Ascending aorta (tissue), 2 donors: ENCODE measurements at regions of chr20 and their contacts with region 1.

Region 1: GRCh38 chr20:44683263-44684046 is 31.7 kb upstream of the CCN5 start:
- DNase-seq: no peak
- H3K4me3 ChIP-seq: no peak overlapping the region
- H3K27ac ChIP-seq: no peak overlapping the region
- H3K4me1 ChIP-seq: peaks cover 0 to 5% of the 10 kb centered on the region in 2 donors
- H3K27me3 ChIP-seq: no peaks in the 10 kb centered on the region
- CTCF ChIP-seq: peak in 2 of 3 experiments; percentile 34 to 46

Region 2: DNA sequence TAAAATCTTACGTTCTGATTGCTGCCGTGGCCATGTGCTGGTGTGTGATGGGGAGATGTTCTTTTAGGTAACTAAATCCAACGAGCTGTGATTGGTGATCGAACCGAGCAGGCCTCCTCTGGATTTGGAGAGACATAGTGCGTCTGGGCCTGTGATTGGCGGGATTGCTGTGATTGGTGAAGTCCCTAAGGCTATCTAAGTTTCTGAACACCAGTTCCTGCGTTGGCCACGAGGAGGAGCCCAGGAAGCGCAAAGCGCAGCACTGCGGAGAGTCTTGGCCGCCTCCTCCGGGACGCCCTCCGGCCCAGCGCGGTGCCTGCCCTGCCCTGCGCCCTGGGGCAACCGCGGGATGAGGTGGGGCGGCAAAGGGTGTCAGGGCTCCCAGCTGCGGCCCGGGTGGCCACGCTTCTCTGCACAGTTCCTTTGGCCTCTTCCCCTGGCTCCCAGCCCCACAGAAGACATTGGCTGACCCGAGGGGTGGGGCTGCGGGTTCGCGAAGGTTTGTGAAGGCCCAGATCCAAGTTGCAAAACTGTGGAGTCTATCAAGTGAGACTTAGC is 294.9 kb before region 1 on chr20:
- intact Hi-C with region 1: loop called (anchors 10 kb)
- DNase-seq: peak in 1 of 2 donors; percentile 68
- H3K4me3 ChIP-seq: no peak overlapping the region
- H3K27ac ChIP-seq: no peak overlapping the region
- H3K4me1 ChIP-seq: peaks cover 0 to 2% of the 10 kb centered on the region in 2 donors
- H3K27me3 ChIP-seq: no peaks in the 10 kb centered on the region
- CTCF ChIP-seq: peak; percentile 44 to 58 (median 56)

Region 3: GRCh38 chr20:44733341-44734069 is 50.0 kb after region 1 on chr20:
- intact Hi-C with region 1: loop called (anchors 1 kb)
- DNase-seq: peak in 1 of 2 donors; percentile 90
- H3K4me3 ChIP-seq: no peak overlapping the region
- H3K27ac ChIP-seq: peak overlapping the region; percentile 80 to 93
- H3K4me1 ChIP-seq: peaks cover 11 to 54% of the 10 kb centered on the region in 2 donors
- H3K27me3 ChIP-seq: no peaks in the 10 kb centered on the region
- CTCF ChIP-seq: peak; percentile 94 to 96 (median 95)

Region 4: DNA sequence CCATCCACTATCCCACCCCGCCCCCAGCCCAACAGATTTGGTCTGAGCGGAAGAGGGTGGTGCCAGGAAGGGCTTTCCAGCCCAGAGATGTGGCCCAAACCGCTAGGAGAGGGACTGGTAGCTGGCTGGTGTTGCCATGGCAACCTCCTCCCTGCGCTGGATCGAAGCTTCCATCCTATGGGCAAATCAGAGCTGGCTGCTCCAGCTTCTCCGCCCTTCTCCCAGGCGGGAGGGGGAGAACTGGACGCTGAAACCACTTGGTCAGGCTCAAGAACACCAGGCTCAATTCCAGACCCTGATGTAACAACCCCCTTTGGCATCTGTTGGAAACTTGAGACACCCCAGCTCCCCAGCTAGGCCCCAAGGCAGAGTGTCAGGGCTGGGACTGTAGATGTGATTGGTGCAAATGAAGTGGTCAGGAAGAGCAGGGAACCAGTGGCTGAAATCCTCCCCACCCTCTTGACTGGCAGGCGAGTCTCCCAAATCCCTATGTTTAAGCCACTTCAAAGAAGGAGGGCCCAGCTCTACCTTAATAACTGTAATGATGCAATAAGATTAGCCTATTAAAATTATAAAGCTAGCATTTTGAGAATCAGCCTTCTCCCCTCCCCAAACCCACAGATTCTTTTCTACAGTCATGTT is 122.6 kb after region 1 on chr20:
- intact Hi-C with region 1: no loop called
- DNase-seq: peak; percentile 17 to 79
- H3K4me3 ChIP-seq: no peak overlapping the region
- H3K27ac ChIP-seq: no peak overlapping the region
- H3K4me1 ChIP-seq: peaks cover 7 to 10% of the 10 kb centered on the region in 2 donors
- H3K27me3 ChIP-seq: peaks cover 10% of the 10 kb centered on the region
- CTCF ChIP-seq: no peak

Region 5: GRCh38 chr20:44866703-44867335 is 183.4 kb after region 1 on chr20:
- intact Hi-C with region 1: loop called (anchors 1 kb)
- DNase-seq: no peak
- H3K4me3 ChIP-seq: peak overlapping the region in 1 of 2 donors; percentile 46
- H3K27ac ChIP-seq: peak overlapping the region in 1 of 2 donors; percentile 9
- H3K4me1 ChIP-seq: peaks cover 9 to 31% of the 10 kb centered on the region in 2 donors
- H3K27me3 ChIP-seq: no peaks in the 10 kb centered on the region
- CTCF ChIP-seq: no peak

Region 6: DNA sequence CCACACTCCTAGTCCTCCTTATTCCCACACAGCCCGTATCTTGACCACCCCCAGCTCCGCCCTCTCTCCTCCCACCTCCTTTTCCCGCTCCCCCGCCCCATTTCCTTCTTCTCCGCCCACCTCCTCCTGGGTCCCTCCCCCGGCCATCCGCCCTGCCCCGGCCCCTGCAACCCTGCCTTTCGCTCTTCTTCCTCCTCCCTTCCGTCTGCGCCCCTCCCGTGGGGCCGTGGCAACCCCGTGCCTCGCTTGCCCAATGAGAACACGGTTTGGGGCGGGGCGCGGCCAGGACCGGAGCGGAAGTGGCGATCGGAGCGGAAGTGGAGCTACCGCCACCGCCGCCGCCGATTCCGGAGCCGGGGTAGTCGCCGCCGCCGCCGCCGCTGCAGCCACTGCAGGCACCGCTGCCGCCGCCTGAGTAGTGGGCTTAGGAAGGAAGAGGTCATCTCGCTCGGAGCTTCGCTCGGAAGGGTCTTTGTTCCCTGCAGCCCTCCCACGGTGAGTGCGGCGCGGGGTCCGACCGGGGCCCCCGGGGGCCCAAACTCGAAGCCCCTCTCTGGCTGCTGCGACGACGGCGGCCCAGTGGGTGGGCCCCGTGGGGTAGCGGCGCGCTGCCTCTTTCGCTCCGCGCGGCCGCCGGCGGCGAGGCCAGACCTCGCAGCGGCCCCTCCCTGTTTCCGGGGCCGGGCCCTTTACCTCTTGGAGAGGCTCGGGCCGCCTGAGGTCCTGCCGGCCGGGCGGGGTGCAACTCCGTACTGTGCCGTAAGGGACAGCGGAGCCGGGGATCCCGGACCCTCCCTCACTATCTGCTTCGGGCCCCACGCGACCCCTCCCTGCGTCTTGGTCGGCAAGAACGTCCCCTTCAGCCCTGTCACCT is 202.2 kb after region 1 on chr20 and contains the start of gene YWHAB:
- intact Hi-C with region 1: loop called (anchors 5 kb)
- DNase-seq: peak; percentile 96 to 99
- H3K4me3 ChIP-seq: peak within 1 kb of the TSS; percentile 78 to 91
- H3K27ac ChIP-seq: peak within 1 kb of the TSS; percentile 96 to 97
- H3K4me1 ChIP-seq: peaks cover 0 to 28% of the 10 kb centered on the region in 2 donors
- H3K27me3 ChIP-seq: no peaks in the 10 kb centered on the region
- CTCF ChIP-seq: no peak
- total RNA-seq, gene YWHAB: 50.4 TPM

Region 7: GRCh38 chr20:45279992-45280391 is 596.5 kb after region 1 on chr20:
- intact Hi-C with region 1: no loop called
- DNase-seq: no peak
- H3K4me3 ChIP-seq: no peak overlapping the region
- H3K27ac ChIP-seq: no peak overlapping the region
- H3K4me1 ChIP-seq: no peaks in the 10 kb centered on the region
- H3K27me3 ChIP-seq: no peaks in the 10 kb centered on the region
- CTCF ChIP-seq: no peak